ENCODE measurements at regions of chr7 and their contacts with region 1.

Region 1: DNA sequence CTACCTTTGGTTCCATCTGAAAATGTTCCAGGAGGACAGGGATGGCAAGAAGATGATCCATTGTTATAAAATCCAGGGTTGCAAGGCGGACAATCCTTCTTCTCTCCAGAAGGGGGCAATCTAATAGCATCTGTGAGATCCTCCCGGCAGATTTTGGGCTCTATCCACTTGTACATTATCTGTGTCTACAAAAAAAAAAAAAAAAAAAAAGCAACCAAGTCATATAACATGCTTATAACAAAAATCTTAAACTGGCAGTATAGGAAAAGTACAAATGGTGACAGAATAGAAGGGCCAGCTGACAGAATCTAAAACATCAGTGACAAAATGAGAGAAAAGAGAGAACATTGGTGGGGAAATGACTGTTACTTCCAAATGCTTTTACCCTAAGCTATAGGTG is 132.7 kb downstream of the ELAPOR2 start:
- DNase-seq: peak in 4 of 9 experiments; percentile 35 to 67 (median 50)
- ATAC-seq: peak; percentile 85
- H3K4me3 ChIP-seq: no peak overlapping the region
- H3K4me3 Mint-ChIP-seq: no peak overlapping the region
- H3K27ac ChIP-seq: no peak overlapping the region
- H3K27ac Mint-ChIP-seq: no peak overlapping the region
- H3K4me1 ChIP-seq: no peaks in the 10 kb centered on the region
- H3K4me1 Mint-ChIP-seq: no peaks in the 10 kb centered on the region
- H3K27me3 ChIP-seq: no peaks in the 10 kb centered on the region
- H3K27me3 Mint-ChIP-seq: peaks cover 8% of the 10 kb centered on the region
- CTCF ChIP-seq: peak; percentile 91

Region 2: DNA sequence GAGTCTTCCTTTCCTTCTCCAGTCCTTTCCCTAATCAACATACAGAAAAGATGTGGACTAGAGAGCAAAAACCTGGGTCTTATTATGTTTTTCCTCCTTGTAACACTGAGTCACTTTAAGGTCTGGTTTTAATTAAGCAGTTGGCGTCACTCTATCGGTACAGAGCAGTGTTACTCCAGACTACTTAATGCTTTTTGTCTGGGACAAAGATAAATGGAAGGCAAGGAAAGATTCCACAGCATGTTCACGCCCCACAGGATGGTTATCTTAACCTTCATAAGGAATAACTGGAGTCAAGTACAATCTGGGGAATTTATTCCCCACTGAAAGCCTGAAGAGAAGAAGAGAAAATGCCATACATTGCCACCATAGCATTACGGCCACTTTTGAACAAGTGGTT is 13.0 kb before region 1 on chr7:
- CTCF ChIA-PET with region 1: interaction called, 7 read pairs
- POLR2A ChIA-PET with region 1: no interaction called
- intact Hi-C with region 1: loop called in 1 of 2 experiments (anchors 1 kb)
- DNase-seq: no peak
- ATAC-seq: no peak
- H3K4me3 ChIP-seq: no peak overlapping the region
- H3K4me3 Mint-ChIP-seq: no peak overlapping the region
- H3K27ac ChIP-seq: no peak overlapping the region
- H3K27ac Mint-ChIP-seq: no peak overlapping the region
- H3K4me1 ChIP-seq: no peaks in the 10 kb centered on the region
- H3K4me1 Mint-ChIP-seq: no peaks in the 10 kb centered on the region
- H3K27me3 ChIP-seq: no peaks in the 10 kb centered on the region
- H3K27me3 Mint-ChIP-seq: peaks cover 2% of the 10 kb centered on the region
- CTCF ChIP-seq: no peak

Region 3: DNA sequence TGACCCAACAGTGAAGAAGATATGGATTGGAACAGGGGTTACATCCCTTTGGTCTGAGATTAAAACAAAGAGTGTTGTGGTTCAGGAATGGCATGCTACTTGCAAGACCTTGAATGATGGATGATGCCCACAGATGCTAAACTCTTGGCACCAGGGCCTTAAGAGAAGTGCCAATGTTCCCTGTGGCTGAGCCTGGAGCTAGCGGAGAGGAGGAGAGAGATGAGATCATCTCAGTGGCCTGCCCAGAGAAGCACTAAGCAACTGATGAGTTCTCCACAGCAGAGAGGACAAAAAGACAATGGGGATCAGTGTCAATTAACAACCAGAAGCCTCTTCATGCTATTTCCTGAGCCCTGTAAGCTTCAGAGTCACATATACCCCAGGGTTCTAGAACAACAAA is 35.0 kb after region 1 on chr7:
- CTCF ChIA-PET with region 1: no interaction called
- POLR2A ChIA-PET with region 1: no interaction called
- intact Hi-C with region 1: no loop called
- DNase-seq: no peak
- ATAC-seq: no peak
- H3K4me3 ChIP-seq: no peak overlapping the region
- H3K4me3 Mint-ChIP-seq: no peak overlapping the region
- H3K27ac ChIP-seq: no peak overlapping the region
- H3K27ac Mint-ChIP-seq: no peak overlapping the region
- H3K4me1 ChIP-seq: no peaks in the 10 kb centered on the region
- H3K4me1 Mint-ChIP-seq: no peaks in the 10 kb centered on the region
- H3K27me3 ChIP-seq: no peaks in the 10 kb centered on the region
- H3K27me3 Mint-ChIP-seq: peaks cover 7% of the 10 kb centered on the region
- CTCF ChIP-seq: no peak

Region 4: DNA sequence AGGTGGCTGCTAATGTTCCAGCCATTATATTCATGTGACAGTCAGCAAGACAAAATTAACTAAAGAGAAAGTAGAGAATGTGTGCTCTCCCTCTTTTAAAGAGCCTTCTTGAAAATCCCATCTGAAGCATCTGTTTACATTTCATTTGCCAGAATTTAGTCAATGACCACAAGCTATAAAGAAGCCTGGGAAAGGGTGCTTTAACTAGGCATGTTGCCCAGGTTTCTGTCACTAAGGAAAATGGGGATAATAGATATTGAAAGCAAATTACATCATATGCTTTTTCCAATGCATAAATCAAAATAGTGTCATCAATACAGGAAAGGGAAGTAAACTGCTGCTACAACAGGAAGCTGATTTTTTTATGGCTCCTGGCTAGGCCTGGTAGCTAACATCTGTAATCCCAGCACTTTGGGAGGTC is 65.0 kb after region 1 on chr7:
- CTCF ChIA-PET with region 1: no interaction called
- POLR2A ChIA-PET with region 1: no interaction called
- intact Hi-C with region 1: loop called in 1 of 2 experiments (anchors 2 kb)
- DNase-seq: no peak
- ATAC-seq: no peak
- H3K4me3 ChIP-seq: no peak overlapping the region
- H3K4me3 Mint-ChIP-seq: no peak overlapping the region
- H3K27ac ChIP-seq: no peak overlapping the region
- H3K27ac Mint-ChIP-seq: no peak overlapping the region
- H3K4me1 ChIP-seq: no peaks in the 10 kb centered on the region
- H3K4me1 Mint-ChIP-seq: peaks cover 5% of the 10 kb centered on the region
- H3K27me3 ChIP-seq: no peaks in the 10 kb centered on the region
- H3K27me3 Mint-ChIP-seq: peaks cover 8% of the 10 kb centered on the region
- CTCF ChIP-seq: no peak

Region 5: GRCh38 chr7:87059525-87060287 is 133.0 kb after region 1 on chr7 and contains the start of gene ELAPOR2:
- CTCF ChIA-PET with region 1: no interaction called
- POLR2A ChIA-PET with region 1: no interaction called
- intact Hi-C with region 1: loop called in 1 of 2 experiments (anchors 5 kb)
- DNase-seq: peak; percentile 64 to 89 (median 80)
- ATAC-seq: peak; percentile 94
- H3K4me3 ChIP-seq: peak within 1 kb of the TSS; percentile 43 to 62
- H3K4me3 Mint-ChIP-seq: peak within 1 kb of the TSS; percentile 87
- H3K27ac ChIP-seq: peak within 1 kb of the TSS; percentile 16 to 38
- H3K27ac Mint-ChIP-seq: peak within 1 kb of the TSS; percentile 77
- H3K4me1 ChIP-seq: peaks cover 10% of the 10 kb centered on the region
- H3K4me1 Mint-ChIP-seq: peaks cover 16% of the 10 kb centered on the region
- H3K27me3 ChIP-seq: no peaks in the 10 kb centered on the region
- H3K27me3 Mint-ChIP-seq: peaks cover 5% of the 10 kb centered on the region
- CTCF ChIP-seq: no peak
- total RNA-seq, gene ELAPOR2: 5.1 to 5.7 TPM

Region 6: DNA sequence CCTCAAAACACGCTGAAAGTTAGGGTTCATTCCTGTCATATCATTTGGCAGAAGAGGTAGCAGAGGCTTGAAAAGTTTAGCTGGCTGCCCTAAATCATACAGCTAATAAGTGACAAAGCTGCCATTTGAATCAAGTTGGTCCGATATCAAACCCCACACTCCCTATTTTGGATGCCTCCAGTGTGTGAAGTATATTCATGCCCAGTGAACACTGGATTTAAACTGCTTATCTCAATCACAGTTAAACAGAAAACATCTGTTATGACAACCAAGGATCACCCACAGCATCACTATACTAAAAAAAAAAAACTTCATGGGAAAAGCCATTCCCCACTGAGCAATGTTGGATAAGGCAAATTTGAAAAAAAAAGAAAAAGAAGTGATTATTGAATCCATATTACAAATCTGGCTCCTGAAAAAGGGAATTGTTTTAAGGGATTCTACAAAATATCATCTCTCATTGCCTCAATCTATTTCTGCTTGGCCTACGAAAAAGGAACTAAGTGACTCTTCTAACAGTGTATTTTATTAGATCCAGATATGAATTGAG is 625.7 kb after region 1 on chr7:
- CTCF ChIA-PET with region 1: no interaction called
- POLR2A ChIA-PET with region 1: no interaction called
- intact Hi-C with region 1: no loop called
- DNase-seq: no peak
- ATAC-seq: no peak
- H3K4me3 ChIP-seq: no peak overlapping the region
- H3K4me3 Mint-ChIP-seq: no peak overlapping the region
- H3K27ac ChIP-seq: no peak overlapping the region
- H3K27ac Mint-ChIP-seq: no peak overlapping the region
- H3K4me1 ChIP-seq: no peaks in the 10 kb centered on the region
- H3K4me1 Mint-ChIP-seq: no peaks in the 10 kb centered on the region
- H3K27me3 ChIP-seq: no peaks in the 10 kb centered on the region
- H3K27me3 Mint-ChIP-seq: no peaks in the 10 kb centered on the region
- CTCF ChIP-seq: no peak

Measured in CD8-positive, alpha-beta T cell (primary cell).